Activated CD4-positive, alpha-beta memory T cell treated with anti-CD3 and anti-CD28 coated beads for 36 hours (primary cell): ENCODE measurements at regions of chr21 and their contacts with region 1.

Region 1: GRCh38 chr21:38244885-38245545 is 11.8 kb upstream of the KCNJ15 start:
- DNase-seq: peak; percentile 79
- H3K4me3 Mint-ChIP-seq: no peak overlapping the region
- H3K27ac Mint-ChIP-seq: peak overlapping the region; percentile 64
- H3K4me1 Mint-ChIP-seq: peaks cover 26% of the 10 kb centered on the region
- H3K27me3 Mint-ChIP-seq: peaks cover 14% of the 10 kb centered on the region

Region 2: GRCh38 chr21:38148046-38148445 is 97.0 kb before region 1 on chr21:
- CTCF ChIA-PET with region 1: no interaction called
- POLR2A ChIA-PET with region 1: no interaction called
- intact Hi-C with region 1: no loop called
- DNase-seq: no peak
- H3K4me3 Mint-ChIP-seq: no peak overlapping the region
- H3K27ac Mint-ChIP-seq: no peak overlapping the region
- H3K4me1 Mint-ChIP-seq: no peaks in the 10 kb centered on the region
- H3K27me3 Mint-ChIP-seq: peaks cover 8% of the 10 kb centered on the region

Region 3: GRCh38 chr21:38277501-38278131 is 32.6 kb after region 1 on chr21:
- CTCF ChIA-PET with region 1: no interaction called
- POLR2A ChIA-PET with region 1: no interaction called
- intact Hi-C with region 1: loop called (anchors 2 kb)
- DNase-seq: peak; percentile 34
- H3K4me3 Mint-ChIP-seq: no peak overlapping the region
- H3K27ac Mint-ChIP-seq: no peak overlapping the region
- H3K4me1 Mint-ChIP-seq: peaks cover 5% of the 10 kb centered on the region
- H3K27me3 Mint-ChIP-seq: peaks cover 8% of the 10 kb centered on the region

Region 4: DNA sequence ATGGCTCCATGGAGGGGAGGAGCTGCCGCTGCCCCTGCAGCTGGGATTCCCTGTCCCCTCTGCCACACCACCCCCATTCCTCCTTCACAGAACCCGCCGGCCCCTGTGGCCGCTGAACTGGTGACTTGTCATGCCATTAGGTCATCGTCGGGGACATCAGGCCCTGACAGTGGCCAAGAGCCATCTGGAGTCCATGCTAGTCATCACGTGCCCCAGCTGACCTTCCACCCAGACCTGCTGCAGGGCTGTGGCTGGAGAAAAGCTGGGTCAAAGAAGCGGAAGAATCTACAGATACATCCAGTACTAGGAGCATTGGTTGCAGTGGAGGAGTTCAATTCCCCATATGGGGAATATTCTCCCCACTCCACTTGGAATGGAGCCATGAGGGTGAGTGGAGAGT is 89.9 kb after region 1 on chr21:
- CTCF ChIA-PET with region 1: no interaction called
- POLR2A ChIA-PET with region 1: no interaction called
- intact Hi-C with region 1: no loop called
- DNase-seq: no peak
- H3K4me3 Mint-ChIP-seq: no peak overlapping the region
- H3K27ac Mint-ChIP-seq: no peak overlapping the region
- H3K4me1 Mint-ChIP-seq: no peaks in the 10 kb centered on the region
- H3K27me3 Mint-ChIP-seq: peaks cover 1% of the 10 kb centered on the region